ENCODE measurements at regions of chr18 and their contacts with region 1.

Region 1: GRCh38 chr18:62714671-62715435 is 488 bp upstream of the PHLPP1 start:
- DNase-seq: peak; percentile 95 to 97
- H3K4me3 ChIP-seq: peak overlapping the region; percentile 73
- H3K4me3 Mint-ChIP-seq: peak overlapping the region; percentile 74
- H3K27ac Mint-ChIP-seq: peak overlapping the region; percentile 72
- H3K4me1 ChIP-seq: 0 out of 2 replicates have a peak, but pooled peaks cover 3% of the 10 kb centered on the region
- H3K4me1 Mint-ChIP-seq: no peaks in the 10 kb centered on the region
- H3K27me3 ChIP-seq: no peaks in the 10 kb centered on the region
- H3K27me3 Mint-ChIP-seq: no peaks in the 10 kb centered on the region
- CTCF ChIP-seq: peak in 1 of 2 experiments; percentile 43

Region 2: DNA sequence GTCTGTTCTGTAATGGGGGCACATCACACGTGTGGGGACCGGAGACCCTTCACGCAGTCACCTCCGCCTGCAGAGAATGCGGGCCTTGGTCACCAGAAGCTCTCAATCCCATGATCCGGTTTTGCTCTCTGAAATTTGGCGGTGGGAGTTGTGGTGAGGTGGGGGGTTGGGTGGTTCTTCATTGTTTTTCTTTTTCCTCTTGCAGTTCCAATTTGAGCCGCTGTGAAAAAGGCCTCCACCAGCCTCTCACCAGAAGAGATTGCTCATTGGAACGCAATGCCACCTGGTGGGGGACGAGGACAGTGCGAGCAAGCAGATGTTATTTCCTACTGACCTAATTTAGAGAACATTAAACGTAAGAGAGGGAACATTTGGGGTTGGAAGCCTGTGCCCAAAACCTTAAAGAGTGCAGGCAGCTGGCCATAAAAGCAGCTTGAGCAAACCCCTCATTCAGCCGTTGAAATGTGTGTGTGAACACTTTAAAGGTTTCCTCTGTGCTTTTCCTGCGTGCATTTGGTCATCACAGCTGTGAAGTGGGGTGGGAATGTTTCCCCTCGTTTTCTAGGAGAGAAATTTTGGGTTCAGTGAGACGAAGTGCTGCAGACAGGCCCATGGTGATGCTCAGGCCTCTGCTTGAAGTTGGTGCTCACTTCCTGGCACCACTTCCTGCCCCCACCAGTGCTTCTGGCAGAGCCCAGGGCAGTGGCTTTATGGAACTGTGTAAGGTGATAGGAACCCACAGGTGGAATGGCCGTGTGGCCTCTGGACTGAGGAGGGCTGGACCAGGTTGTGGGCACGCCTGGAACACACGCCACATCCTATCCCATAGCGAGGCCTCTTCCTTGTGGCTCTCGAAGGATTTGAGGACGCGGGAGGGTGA is 130.4 kb before region 1 on chr18:
- CTCF ChIA-PET with region 1: no interaction called
- POLR2A ChIA-PET with region 1: no interaction called
- intact Hi-C with region 1: loop called (anchors 10 kb)
- DNase-seq: peak; percentile 72 to 76
- H3K4me3 ChIP-seq: no peak overlapping the region
- H3K4me3 Mint-ChIP-seq: peak overlapping the region; percentile 48
- H3K27ac Mint-ChIP-seq: no peak overlapping the region
- H3K4me1 ChIP-seq: no peaks in the 10 kb centered on the region
- H3K4me1 Mint-ChIP-seq: peaks cover 7% of the 10 kb centered on the region
- H3K27me3 ChIP-seq: no peaks in the 10 kb centered on the region
- H3K27me3 Mint-ChIP-seq: no peaks in the 10 kb centered on the region
- CTCF ChIP-seq: peak; percentile 81 to 87

Region 3: DNA sequence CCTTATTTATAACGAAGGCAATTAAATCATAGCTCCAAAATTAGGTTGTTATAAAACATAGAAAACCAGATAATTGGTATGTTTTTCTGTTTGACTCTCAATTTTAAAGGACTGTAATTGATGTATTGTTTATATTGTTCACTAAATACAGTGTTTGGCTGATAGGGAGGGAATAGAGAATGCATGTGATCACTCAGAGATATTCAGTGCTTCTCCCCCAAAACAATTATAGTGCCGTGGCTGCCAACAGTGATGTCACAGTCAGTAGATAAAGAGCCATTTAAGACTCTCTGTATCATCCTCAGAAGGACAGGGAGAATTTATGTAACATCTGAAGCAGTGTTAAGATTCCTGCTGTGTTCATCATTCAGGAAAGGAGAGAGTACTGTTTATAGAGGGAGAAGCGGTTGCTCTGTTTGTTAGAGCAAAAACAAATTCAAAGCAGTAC is 70.1 kb after region 1 on chr18:
- CTCF ChIA-PET with region 1: interaction called, 3 read pairs
- POLR2A ChIA-PET with region 1: no interaction called
- intact Hi-C with region 1: loop called (anchors 5 kb)
- DNase-seq: no peak
- H3K4me3 ChIP-seq: no peak overlapping the region
- H3K4me3 Mint-ChIP-seq: no peak overlapping the region
- H3K27ac Mint-ChIP-seq: no peak overlapping the region
- H3K4me1 ChIP-seq: peaks cover 10% of the 10 kb centered on the region; the same call in 1 of the 2 replicates
- H3K4me1 Mint-ChIP-seq: peaks cover 35% of the 10 kb centered on the region
- H3K27me3 ChIP-seq: no peaks in the 10 kb centered on the region
- H3K27me3 Mint-ChIP-seq: no peaks in the 10 kb centered on the region
- CTCF ChIP-seq: no peak

Region 4: GRCh38 chr18:62881509-62882016 is 166.7 kb after region 1 on chr18:
- CTCF ChIA-PET with region 1: no interaction called
- POLR2A ChIA-PET with region 1: no interaction called
- intact Hi-C with region 1: loop called (anchors 10 kb)
- DNase-seq: no peak
- H3K4me3 ChIP-seq: no peak overlapping the region
- H3K4me3 Mint-ChIP-seq: no peak overlapping the region
- H3K27ac Mint-ChIP-seq: no peak overlapping the region
- H3K4me1 ChIP-seq: peaks cover 29% of the 10 kb centered on the region
- H3K4me1 Mint-ChIP-seq: peaks cover 22% of the 10 kb centered on the region
- H3K27me3 ChIP-seq: no peaks in the 10 kb centered on the region
- H3K27me3 Mint-ChIP-seq: no peaks in the 10 kb centered on the region
- CTCF ChIP-seq: no peak

Region 5: DNA sequence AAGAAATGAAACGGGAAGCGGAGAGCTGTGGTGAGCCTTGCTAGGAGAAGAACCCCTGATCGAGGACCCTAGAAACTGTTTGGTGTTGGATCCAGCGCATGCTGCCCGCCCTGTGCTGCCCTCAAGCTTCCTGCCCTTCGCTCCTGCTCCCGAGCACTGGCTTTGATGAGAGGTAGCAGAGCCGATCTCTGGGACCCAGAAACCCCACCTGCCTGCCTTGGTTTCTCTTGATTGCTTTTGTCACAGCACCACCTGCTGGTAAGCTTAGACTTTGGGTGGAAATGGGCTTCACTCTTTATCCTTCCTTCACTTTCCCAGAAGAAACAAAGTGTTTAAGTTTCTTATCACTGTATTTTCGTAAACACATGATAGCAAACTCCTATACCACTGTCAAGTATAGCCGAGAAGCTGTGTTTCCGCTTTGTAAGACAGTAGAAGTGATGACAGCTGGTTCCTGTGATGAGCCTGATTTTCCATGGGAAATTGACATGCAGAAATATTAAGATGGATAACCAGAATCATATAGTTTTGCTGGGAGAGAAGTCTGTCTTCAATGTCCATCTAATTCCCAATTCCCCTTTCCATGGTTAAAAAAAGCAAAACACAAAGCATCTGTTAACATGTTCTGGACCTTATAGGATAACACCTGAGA is 267.9 kb after region 1 on chr18:
- CTCF ChIA-PET with region 1: no interaction called
- POLR2A ChIA-PET with region 1: no interaction called
- intact Hi-C with region 1: loop called (anchors 1 kb)
- DNase-seq: peak in 1 of 2 experiments; percentile 37
- H3K4me3 ChIP-seq: no peak overlapping the region
- H3K4me3 Mint-ChIP-seq: no peak overlapping the region
- H3K27ac Mint-ChIP-seq: no peak overlapping the region
- H3K4me1 ChIP-seq: no peaks in the 10 kb centered on the region
- H3K4me1 Mint-ChIP-seq: no peaks in the 10 kb centered on the region
- H3K27me3 ChIP-seq: no peaks in the 10 kb centered on the region
- H3K27me3 Mint-ChIP-seq: no peaks in the 10 kb centered on the region
- CTCF ChIP-seq: peak; percentile 29 to 34